ENCODE measurements at regions of chr3 and their contacts with region 1.

Region 1: DNA sequence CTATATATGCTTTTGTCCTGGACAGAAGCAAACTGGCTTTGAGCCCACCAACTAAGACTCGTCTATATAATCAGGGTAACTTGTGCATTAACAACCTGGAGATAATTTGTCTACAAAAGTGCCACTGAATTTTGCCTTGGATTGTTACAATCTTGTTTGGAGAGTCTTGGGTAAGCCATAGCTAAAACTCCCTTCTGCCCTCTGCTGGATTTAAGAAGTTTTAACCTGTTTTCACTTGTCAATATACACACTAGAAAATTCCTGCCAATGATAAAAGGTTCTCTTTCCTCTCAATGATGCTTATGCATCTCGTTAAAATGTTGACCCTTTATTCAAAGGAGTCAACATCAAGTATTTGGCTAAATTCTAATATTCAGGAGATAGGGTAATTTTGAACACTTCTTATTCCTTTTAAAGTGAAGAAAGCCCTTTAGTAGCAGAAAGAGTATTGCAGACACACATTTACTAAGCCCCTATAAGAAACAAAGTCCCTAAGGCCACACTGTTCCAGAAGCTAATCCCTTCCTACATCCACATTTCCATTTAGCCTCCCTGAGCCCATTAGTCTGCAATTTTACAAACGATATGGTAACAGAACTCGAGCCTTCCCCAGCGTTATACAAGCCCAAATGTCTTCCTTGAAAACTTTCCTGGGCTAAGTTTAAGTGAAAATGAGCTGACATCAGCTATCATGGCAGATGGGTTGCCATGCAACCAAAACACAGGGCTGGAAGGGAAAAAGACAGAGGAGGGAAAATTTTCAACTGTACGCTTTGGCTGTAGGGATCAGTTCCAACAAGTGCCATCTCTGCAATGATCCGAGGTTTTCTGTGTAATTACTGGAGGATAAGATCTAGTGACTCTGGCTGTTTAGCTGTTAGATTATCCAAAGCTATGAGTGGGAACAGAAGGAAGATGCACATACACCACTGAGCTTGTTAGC is 75.9 kb upstream of the FGF12 start:
- DNase-seq: no peak
- ATAC-seq: no peak
- H3K4me3 ChIP-seq: no peak overlapping the region
- H3K27ac ChIP-seq: no peak overlapping the region
- H3K4me1 ChIP-seq: no peaks in the 10 kb centered on the region
- H3K27me3 ChIP-seq: no peaks in the 10 kb centered on the region
- CTCF ChIP-seq: peak; percentile 14 to 65 (median 55)
- POLR2A ChIP-seq: no peak

Region 2: DNA sequence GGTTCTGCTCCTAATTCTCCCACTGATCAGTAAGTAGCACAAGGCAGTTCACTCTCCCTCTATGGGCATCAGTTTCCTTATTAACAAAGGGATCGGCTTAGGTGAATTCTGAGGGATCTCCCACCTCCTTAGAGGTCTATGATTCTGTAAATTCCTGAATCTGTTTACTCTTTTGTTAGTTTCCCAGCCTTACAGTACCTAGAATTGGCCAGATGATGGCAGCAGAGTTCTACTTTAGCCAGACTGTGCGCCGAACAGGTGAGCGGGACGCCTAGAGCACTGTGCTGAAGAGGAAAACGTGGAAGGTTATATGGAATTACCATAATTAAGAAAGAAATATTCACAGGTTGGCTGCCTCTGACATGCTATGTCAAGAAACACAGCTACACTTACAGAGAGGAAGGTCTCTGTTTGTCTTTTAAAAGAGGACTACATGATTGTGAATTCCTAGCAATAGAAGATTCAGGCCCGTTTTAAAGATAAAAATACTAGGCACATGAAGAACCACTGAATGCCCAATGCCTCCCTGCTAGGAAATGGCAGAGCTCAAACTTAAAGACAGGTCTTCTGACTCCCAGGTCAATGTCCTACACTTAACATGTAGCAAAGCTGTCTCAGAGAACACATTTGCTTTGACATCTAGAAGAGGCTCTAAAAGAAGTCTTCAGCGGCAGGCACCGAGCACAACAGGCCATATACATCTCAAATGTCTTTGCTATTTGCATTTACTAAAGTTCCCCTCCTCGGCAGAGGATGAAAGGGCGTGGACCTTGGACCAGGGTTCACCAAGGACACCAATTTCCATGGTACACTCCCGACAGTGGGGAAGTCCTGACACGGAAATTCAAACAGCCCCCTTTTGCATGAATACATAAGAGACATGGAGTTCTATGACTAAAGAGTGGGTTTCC is 335.7 kb before region 1 on chr3:
- intact Hi-C with region 1: loop called (anchors 5 kb)
- DNase-seq: peak; percentile 72 to 78 (median 76)
- ATAC-seq: peak; percentile 88
- H3K4me3 ChIP-seq: no peak overlapping the region
- H3K27ac ChIP-seq: no peak overlapping the region
- H3K4me1 ChIP-seq: no peaks in the 10 kb centered on the region
- H3K27me3 ChIP-seq: no peaks in the 10 kb centered on the region
- CTCF ChIP-seq: peak; percentile 79 to 92 (median 89)
- POLR2A ChIP-seq: no peak

Region 3: DNA sequence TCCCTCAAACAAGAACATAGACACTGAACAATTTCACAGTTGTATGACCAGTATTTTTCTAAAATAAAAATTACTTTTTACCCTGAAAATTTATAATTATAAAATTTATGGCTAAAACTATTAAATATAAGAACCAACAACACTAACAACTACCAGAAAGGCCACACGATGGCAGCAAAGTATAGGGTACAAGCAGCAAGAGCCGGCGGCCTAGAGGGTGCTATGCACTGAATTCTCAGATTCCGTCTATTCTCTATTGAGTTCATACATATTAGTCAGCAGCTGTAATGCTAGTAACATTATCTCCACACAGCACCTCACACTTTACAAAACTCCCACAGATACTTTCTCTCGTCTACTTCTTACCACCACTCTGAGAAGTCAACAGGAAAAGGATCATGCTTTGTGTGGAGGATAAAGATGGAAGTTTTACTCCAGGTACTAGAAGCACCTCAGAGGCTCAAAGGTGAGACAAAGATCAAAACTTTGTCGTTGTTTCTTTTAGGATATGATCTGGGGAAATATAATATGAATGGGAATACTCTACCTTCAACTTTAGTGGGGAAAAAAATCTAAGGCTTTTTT is 236.4 kb before region 1 on chr3:
- intact Hi-C with region 1: loop called (anchors 5 kb)
- DNase-seq: peak; percentile 81 to 88 (median 85)
- ATAC-seq: peak; percentile 84
- H3K4me3 ChIP-seq: no peak overlapping the region
- H3K27ac ChIP-seq: no peak overlapping the region
- H3K4me1 ChIP-seq: peaks cover 8% of the 10 kb centered on the region
- H3K27me3 ChIP-seq: no peaks in the 10 kb centered on the region
- CTCF ChIP-seq: peak; percentile 68 to 83 (median 79)
- POLR2A ChIP-seq: no peak

Region 4: DNA sequence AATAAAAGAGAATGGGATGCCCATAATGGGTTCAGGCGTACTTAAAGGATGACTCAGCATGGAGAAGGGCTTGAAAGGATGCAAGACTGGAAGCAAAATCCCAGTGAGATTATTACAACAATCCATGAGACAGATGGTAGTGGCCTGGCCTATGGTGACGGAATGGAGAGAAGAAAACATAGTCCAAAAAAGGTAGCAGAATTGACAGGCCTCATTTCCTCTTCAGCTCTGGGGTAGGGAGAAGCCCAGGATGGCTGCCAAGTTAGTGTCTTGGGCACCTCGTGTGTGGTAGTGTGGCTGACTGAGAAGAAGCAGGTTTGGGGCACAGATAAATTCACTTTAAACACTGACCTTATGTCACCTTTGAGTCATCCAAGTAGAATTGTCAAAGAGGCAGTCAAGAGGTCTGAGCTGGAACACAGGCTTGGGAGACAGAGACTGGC is 96.3 kb after region 1 on chr3:
- intact Hi-C with region 1: no loop called
- DNase-seq: no peak
- ATAC-seq: no peak
- H3K4me3 ChIP-seq: no peak overlapping the region
- H3K27ac ChIP-seq: no peak overlapping the region
- H3K4me1 ChIP-seq: no peaks in the 10 kb centered on the region
- H3K27me3 ChIP-seq: no peaks in the 10 kb centered on the region
- CTCF ChIP-seq: no peak
- POLR2A ChIP-seq: no peak

Region 5: DNA sequence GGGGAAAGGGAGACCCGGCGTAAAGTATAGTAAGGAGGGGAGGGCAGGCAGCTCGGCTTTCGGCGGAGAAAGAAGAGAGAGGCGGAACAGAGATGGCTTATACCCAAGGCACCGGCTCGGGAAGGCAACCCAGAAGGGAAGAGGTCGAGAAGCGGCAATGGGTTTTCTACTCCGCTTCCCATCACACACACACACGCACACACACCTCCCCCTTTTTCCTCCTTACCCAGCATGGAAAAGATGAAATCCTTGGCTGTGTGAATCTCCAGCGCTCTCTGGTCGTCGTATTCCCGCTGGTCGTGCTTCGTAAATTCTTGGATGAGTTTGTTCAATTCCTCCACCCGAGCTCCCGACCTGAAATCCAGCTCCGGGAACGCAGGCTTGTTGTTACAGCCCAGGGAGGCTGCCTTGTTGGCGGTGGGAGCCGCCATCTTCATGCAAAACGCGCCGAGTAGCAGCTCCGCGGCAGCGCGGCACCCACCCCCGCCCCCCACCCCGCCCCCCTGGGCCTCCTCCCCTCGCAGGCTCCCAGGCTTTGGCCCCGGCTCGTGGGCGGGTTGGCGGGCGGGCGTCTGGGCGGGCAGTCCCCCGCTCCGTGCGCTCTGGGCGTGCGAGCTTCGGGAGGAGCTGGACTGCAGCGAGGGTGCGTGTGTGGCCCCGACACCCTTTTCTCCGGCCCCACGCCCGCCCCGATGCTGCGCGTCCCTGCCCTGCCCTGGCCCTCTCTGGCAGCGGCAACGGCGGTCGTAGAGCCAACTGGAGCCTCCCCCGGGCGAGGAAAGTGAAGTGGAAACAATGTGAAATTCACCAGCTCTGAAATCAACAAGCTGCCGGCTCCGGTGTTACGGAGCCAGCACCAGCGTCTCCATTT is 114.4 kb after region 1 on chr3 and contains the start of gene MB21D2:
- intact Hi-C with region 1: no loop called
- DNase-seq: peak; percentile 49 to 72 (median 63)
- ATAC-seq: peak; percentile 76
- H3K4me3 ChIP-seq: peak within 1 kb of the TSS; percentile 80 to 91
- H3K27ac ChIP-seq: peak within 1 kb of the TSS; percentile 9 to 94 (median 85)
- H3K4me1 ChIP-seq: peaks cover 16% of the 10 kb centered on the region
- H3K27me3 ChIP-seq: no peaks in the 10 kb centered on the region
- CTCF ChIP-seq: peak in 2 of 7 experiments; percentile 22 to 24
- POLR2A ChIP-seq: peak; percentile 26 to 67 (median 61)
- total RNA-seq, gene MB21D2: 0.66 to 1.8 TPM

Measured in body of pancreas (tissue), 4 donors.